ENCODE measurements at regions of chr5 and their contacts with region 1.

Region 1: DNA sequence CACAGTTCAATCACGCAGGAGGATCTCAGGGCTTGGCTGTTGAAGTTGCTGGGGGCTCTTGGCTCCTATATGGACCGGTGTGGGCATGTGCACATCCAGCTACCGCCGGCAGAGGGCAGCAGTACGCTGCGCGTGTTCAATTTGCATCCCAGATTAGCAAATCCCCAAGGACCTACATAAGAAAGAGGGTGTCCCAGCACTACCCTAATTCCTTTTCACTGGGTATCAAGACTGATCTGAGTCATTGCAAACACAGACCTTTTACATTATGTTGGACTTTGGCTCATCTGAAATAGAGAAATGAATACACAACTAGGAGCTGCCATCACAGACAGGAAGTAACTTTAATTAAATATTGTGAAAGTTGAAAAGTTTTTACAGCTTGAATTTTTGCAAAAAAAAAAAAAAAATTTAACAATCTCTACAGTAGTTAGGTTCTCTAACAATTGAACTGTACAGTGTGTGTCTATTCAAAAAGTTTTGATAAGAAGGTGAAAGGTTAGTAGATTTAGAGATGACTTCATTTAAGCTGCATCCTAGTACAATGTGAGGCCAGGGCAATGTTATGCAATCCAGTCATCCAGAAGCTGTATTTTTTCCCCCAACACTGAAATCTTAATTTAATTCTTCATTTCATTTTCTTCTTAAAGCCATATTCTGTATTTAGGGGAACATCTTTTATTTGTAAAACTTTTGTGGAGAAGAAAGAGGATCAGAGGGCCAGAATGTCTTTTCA is 404.0 kb downstream of the EBF1 start:
- DNase-seq: peak; percentile 29 to 75 (median 60)
- ATAC-seq: peak; percentile 91
- H3K4me3 ChIP-seq: no peak overlapping the region
- H3K4me3 Mint-ChIP-seq: peak overlapping the region in 6 of 10 donors; percentile 8 to 57 (median 37)
- H3K27ac ChIP-seq: no peak overlapping the region
- H3K27ac Mint-ChIP-seq: no peak overlapping the region
- H3K4me1 ChIP-seq: no peaks in the 10 kb centered on the region
- H3K4me1 Mint-ChIP-seq: peaks cover 0 to 4% (median 2%) of the 10 kb centered on the region in 7 donors
- H3K27me3 ChIP-seq: no peaks in the 10 kb centered on the region
- H3K27me3 Mint-ChIP-seq: peaks cover 0 to 20% (median 0%) of the 10 kb centered on the region in 5 donors

Region 2: GRCh38 chr5:157820593-157821252 is 875.0 kb before region 1 on chr5:
- CTCF ChIA-PET with region 1: no interaction called
- POLR2A ChIA-PET with region 1: no interaction called
- intact Hi-C with region 1: loop called in 1 of 2 experiments (anchors 10 kb)
- DNase-seq: peak in 7 of 9 donors; percentile 5 to 45 (median 32)
- ATAC-seq: peak; percentile 55
- H3K4me3 ChIP-seq: no peak overlapping the region
- H3K4me3 Mint-ChIP-seq: no peak overlapping the region
- H3K27ac ChIP-seq: no peak overlapping the region
- H3K27ac Mint-ChIP-seq: peak overlapping the region in 6 of 9 donors; percentile 0 to 84 (median 40)
- H3K4me1 ChIP-seq: peaks cover 0 to 8% of the 10 kb centered on the region in 2 donors
- H3K4me1 Mint-ChIP-seq: peaks cover 15 to 52% (median 41%) of the 10 kb centered on the region in 7 donors
- H3K27me3 ChIP-seq: no peaks in the 10 kb centered on the region
- H3K27me3 Mint-ChIP-seq: no peaks in the 10 kb centered on the region

Region 3: DNA sequence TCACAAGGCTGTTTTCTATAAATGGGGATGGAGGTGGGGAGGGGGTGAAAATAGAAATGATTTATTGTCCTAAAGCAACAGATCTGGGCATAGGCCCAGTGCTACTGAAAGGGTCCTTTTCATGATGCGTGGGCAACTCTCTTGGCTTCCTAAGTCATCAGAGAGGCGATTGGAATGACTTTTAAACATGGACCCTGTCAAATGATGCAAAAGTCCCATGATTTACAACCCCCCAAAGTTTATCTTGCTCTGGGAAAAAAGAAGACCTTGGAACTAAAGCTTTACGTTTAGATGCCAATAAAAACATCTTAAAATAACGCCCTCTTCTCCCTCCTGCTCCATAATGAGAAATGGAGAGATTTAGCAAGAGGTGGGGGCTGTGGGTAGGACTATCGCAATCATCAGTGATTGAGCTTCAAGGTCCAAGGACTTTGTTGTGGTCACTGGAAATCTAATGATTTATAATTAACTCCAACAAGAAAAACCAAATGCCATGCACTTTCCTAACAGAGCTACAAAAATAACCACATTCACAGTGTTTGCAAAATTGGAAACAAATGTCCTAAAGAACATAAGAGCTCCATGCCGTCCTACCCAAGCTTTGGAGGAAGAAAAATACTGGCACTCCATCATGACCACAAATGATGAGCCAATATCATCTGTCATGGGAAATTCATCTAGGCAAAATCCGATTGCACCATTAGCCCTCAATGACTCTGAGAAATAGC is 669.3 kb before region 1 on chr5:
- CTCF ChIA-PET with region 1: no interaction called
- POLR2A ChIA-PET with region 1: no interaction called
- intact Hi-C with region 1: no loop called
- DNase-seq: no peak
- ATAC-seq: no peak
- H3K4me3 ChIP-seq: no peak overlapping the region
- H3K4me3 Mint-ChIP-seq: no peak overlapping the region
- H3K27ac ChIP-seq: no peak overlapping the region
- H3K27ac Mint-ChIP-seq: no peak overlapping the region
- H3K4me1 ChIP-seq: no peaks in the 10 kb centered on the region
- H3K4me1 Mint-ChIP-seq: no peaks in the 10 kb centered on the region
- H3K27me3 ChIP-seq: no peaks in the 10 kb centered on the region
- H3K27me3 Mint-ChIP-seq: peaks cover 17 to 58% (median 27%) of the 10 kb centered on the region in 5 donors

Region 4: GRCh38 chr5:158174918-158175851 is 520.6 kb before region 1 on chr5:
- CTCF ChIA-PET with region 1: interaction called, 5 read pairs
- POLR2A ChIA-PET with region 1: no interaction called
- intact Hi-C with region 1: loop called in 1 of 2 experiments (anchors 2 kb)
- DNase-seq: peak; percentile 11 to 58 (median 46)
- ATAC-seq: peak; percentile 65
- H3K4me3 ChIP-seq: no peak overlapping the region
- H3K4me3 Mint-ChIP-seq: no peak overlapping the region
- H3K27ac ChIP-seq: no peak overlapping the region
- H3K27ac Mint-ChIP-seq: peak overlapping the region in 1 of 9 donors; percentile 41
- H3K4me1 ChIP-seq: no peaks in the 10 kb centered on the region
- H3K4me1 Mint-ChIP-seq: peaks cover 0 to 5% (median 0%) of the 10 kb centered on the region in 7 donors
- H3K27me3 ChIP-seq: no peaks in the 10 kb centered on the region
- H3K27me3 Mint-ChIP-seq: peaks cover 0 to 10% (median 4%) of the 10 kb centered on the region in 5 donors

Region 5: GRCh38 chr5:158718738-158719505 is 23.2 kb after region 1 on chr5:
- CTCF ChIA-PET with region 1: no interaction called
- POLR2A ChIA-PET with region 1: no interaction called
- intact Hi-C with region 1: no loop called
- DNase-seq: no peak
- ATAC-seq: no peak
- H3K4me3 ChIP-seq: no peak overlapping the region
- H3K4me3 Mint-ChIP-seq: no peak overlapping the region
- H3K27ac ChIP-seq: no peak overlapping the region
- H3K27ac Mint-ChIP-seq: no peak overlapping the region
- H3K4me1 ChIP-seq: no peaks in the 10 kb centered on the region
- H3K4me1 Mint-ChIP-seq: no peaks in the 10 kb centered on the region
- H3K27me3 ChIP-seq: no peaks in the 10 kb centered on the region
- H3K27me3 Mint-ChIP-seq: peaks cover 0 to 16% (median 6%) of the 10 kb centered on the region in 5 donors

Region 6: DNA sequence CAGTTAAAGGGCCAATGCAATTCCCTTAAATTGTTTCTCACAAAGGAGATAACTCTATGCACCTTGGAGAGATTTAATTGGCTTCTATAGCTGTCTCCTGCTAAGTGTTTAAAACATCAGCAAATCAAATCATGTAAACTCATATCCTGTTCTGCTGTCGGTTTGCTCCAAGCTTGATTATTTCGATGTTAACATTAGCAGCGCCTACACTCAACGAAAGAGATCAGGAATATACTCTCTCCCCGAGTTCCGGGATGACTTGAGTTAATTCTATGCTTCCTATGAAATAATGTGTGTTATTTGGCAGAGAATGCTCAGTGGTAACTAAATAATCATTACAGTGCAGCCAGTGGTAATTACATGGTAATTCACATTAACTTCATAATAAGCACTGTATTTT is 65.4 kb after region 1 on chr5:
- CTCF ChIA-PET with region 1: no interaction called
- POLR2A ChIA-PET with region 1: no interaction called
- intact Hi-C with region 1: no loop called
- DNase-seq: no peak
- ATAC-seq: no peak
- H3K4me3 ChIP-seq: no peak overlapping the region
- H3K4me3 Mint-ChIP-seq: no peak overlapping the region
- H3K27ac ChIP-seq: no peak overlapping the region
- H3K27ac Mint-ChIP-seq: no peak overlapping the region
- H3K4me1 ChIP-seq: no peaks in the 10 kb centered on the region
- H3K4me1 Mint-ChIP-seq: peaks cover 0 to 13% (median 6%) of the 10 kb centered on the region in 7 donors
- H3K27me3 ChIP-seq: peaks cover 0 to 4% of the 10 kb centered on the region in 2 donors
- H3K27me3 Mint-ChIP-seq: peaks cover 0 to 29% (median 5%) of the 10 kb centered on the region in 5 donors

Region 7: GRCh38 chr5:158875272-158875679 is 179.5 kb after region 1 on chr5:
- CTCF ChIA-PET with region 1: interaction called, 3 read pairs
- POLR2A ChIA-PET with region 1: no interaction called
- intact Hi-C with region 1: loop called in 1 of 2 experiments (anchors 5 kb)
- DNase-seq: peak in 5 of 9 donors; percentile 0 to 37 (median 20)
- ATAC-seq: peak; percentile 44
- H3K4me3 ChIP-seq: peak overlapping the region; percentile 18
- H3K4me3 Mint-ChIP-seq: peak overlapping the region; percentile 67 to 89 (median 82)
- H3K27ac ChIP-seq: no peak overlapping the region
- H3K27ac Mint-ChIP-seq: peak overlapping the region; percentile 82 to 94 (median 89)
- H3K4me1 ChIP-seq: no peaks in the 10 kb centered on the region
- H3K4me1 Mint-ChIP-seq: peaks cover 8 to 33% (median 28%) of the 10 kb centered on the region in 7 donors
- H3K27me3 ChIP-seq: no peaks in the 10 kb centered on the region
- H3K27me3 Mint-ChIP-seq: peaks cover 0 to 9% (median 4%) of the 10 kb centered on the region in 5 donors

Region 8: GRCh38 chr5:159094745-159095144 is 399.0 kb after region 1 on chr5:
- CTCF ChIA-PET with region 1: interaction called, 11 read pairs
- POLR2A ChIA-PET with region 1: no interaction called
- intact Hi-C with region 1: no loop called
- DNase-seq: peak in 7 of 9 donors; percentile 37 to 70 (median 62)
- ATAC-seq: no peak
- H3K4me3 ChIP-seq: no peak overlapping the region
- H3K4me3 Mint-ChIP-seq: peak overlapping the region in 8 of 10 donors; percentile 10 to 61 (median 43)
- H3K27ac ChIP-seq: no peak overlapping the region
- H3K27ac Mint-ChIP-seq: no peak overlapping the region
- H3K4me1 ChIP-seq: peaks cover 13 to 19% of the 10 kb centered on the region in 2 donors
- H3K4me1 Mint-ChIP-seq: peaks cover 18 to 41% (median 31%) of the 10 kb centered on the region in 7 donors
- H3K27me3 ChIP-seq: peaks cover 15 to 17% of the 10 kb centered on the region in 2 donors
- H3K27me3 Mint-ChIP-seq: peaks cover 35 to 73% (median 39%) of the 10 kb centered on the region in 5 donors

Region 9: DNA sequence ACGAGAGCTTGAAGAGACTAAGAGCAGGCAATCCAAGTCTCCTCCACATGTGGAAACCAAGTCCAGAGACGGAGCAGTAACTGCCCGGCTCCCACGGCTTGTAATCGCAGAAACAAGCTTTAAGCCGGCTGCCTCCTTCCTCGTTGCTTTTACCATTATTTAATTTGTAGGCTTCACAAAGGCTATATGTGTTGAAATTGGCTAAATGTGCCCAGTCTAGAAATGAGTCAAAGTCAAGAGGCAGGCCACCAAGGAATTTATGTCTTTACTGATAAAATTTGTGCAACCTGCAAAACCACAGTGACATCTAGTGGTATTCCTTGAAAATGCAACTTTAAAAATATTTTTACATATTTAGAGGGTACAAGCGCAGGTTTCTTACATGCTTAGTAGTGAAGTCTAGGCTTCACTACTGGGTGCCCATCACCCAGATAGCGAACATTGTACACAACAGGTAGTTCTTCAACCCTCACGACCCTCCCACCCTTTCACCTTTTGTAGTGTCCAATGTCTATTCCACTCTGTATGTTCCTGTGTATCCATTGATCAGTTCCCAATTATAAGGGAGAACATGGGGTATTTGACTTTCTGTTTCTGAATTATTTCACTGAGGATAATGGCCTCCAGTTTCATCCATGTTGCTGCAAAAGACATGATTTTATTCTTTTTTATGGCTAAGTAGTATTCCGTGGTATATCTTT is 437.4 kb after region 1 on chr5:
- CTCF ChIA-PET with region 1: interaction called, 46 read pairs
- POLR2A ChIA-PET with region 1: interaction called, 5 read pairs
- intact Hi-C with region 1: loop called (anchors 1 kb)
- DNase-seq: peak in 6 of 9 donors; percentile 8 to 59 (median 54)
- ATAC-seq: peak; percentile 52
- H3K4me3 ChIP-seq: no peak overlapping the region
- H3K4me3 Mint-ChIP-seq: no peak overlapping the region
- H3K27ac ChIP-seq: no peak overlapping the region
- H3K27ac Mint-ChIP-seq: no peak overlapping the region
- H3K4me1 ChIP-seq: no peaks in the 10 kb centered on the region
- H3K4me1 Mint-ChIP-seq: no peaks in the 10 kb centered on the region
- H3K27me3 ChIP-seq: no peaks in the 10 kb centered on the region
- H3K27me3 Mint-ChIP-seq: peaks cover 0 to 29% (median 7%) of the 10 kb centered on the region in 5 donors

Measured in naive thymus-derived CD4-positive, alpha-beta T cell (primary cell).